ENCODE measurements at regions of chr9 and their contacts with region 1.

Region 1: DNA sequence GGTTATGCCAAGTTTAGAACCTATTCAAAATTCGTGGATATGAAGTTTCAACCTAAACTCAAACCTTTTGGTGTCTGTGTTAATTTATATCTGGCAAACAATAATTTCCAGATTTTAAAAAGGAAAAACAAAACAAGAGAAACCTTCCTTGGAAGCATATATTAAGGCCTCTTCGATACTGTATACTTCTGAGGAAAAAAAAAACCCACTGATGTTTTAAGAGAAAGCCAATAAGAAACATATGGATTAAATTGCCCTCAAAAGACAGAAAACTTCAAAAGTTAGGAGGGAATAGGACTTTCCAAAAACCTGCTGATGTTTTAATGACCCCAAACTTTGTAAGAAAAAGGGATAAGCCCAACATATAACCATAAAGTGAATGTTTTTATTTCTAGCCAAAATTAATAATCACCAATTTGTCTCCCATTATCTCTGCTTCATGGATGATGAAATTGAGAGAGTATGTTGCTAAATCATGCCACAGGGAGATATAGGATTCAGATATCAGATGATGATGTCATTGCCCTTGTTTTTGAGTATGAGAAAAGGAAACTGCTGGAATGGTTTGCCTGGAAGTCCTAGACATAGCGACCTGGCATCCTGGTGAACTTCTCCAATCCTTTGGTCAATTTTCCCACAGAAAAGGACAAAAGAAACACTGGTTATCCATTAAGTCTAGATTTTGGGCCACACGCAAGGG is 423.9 kb downstream of the DMRT2 start:
- DNase-seq: no peak
- H3K4me3 ChIP-seq: no peak overlapping the region
- H3K27ac ChIP-seq: no peak overlapping the region
- H3K27me3 ChIP-seq: no peaks in the 10 kb centered on the region
- CTCF ChIP-seq: no peak

Region 2: DNA sequence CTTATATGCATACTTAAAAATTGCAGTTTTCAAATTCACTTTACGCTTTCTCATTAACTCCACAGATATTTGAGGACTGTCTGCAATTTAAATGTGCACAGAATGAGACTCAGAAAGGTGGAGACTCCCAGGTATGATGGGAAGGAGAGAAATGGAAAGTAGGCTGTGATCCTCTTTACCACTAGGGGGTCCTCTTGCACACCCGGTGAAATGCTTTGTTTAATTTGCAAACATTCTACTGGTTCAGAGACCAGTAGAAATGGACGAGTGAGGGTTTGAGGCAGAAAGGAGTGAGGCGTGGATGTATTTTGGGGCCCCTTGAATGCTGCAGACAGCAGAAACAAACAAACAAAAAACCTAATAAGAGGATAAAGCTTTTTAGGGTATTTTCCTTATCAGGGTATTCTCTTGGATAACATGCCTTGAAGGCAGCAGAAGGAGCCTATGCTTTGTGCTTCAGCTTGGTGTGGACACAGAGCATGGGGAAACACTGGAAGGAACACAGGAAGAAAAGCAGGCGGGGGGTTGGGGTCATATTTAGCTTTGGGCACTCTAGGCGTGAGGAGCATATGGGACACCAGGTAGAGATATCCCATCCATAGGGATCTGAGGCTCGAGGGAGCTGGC is 13.8 kb before region 1 on chr9:
- intact Hi-C with region 1: loop called in 1 of 2 experiments (anchors 2 kb)
- DNase-seq: no peak
- H3K4me3 ChIP-seq: no peak overlapping the region
- H3K27ac ChIP-seq: no peak overlapping the region
- H3K27me3 ChIP-seq: no peaks in the 10 kb centered on the region
- CTCF ChIP-seq: peak in 52 of 56 donors; percentile 22 to 71 (median 48)

Measured in dorsolateral prefrontal cortex (tissue), 120 donors.